ENCODE measurements at regions of chr19 and their contacts with region 1.

Region 1: GRCh38 chr19:11293433-11294389 is 2.2 kb upstream of the TSPAN16 start:
- DNase-seq: peak; percentile 77 to 81
- ATAC-seq: peak; percentile 94 to 100 (median 99)
- H3K4me3 ChIP-seq: no peak overlapping the region
- H3K4me3 Mint-ChIP-seq: no peak overlapping the region
- H3K27ac ChIP-seq: no peak overlapping the region
- H3K27ac Mint-ChIP-seq: no peak overlapping the region
- H3K4me1 ChIP-seq: peaks cover 10% of the 10 kb centered on the region
- H3K4me1 Mint-ChIP-seq: peaks cover 0 to 10% of the 10 kb centered on the region in 2 donors
- H3K27me3 ChIP-seq: no peaks in the 10 kb centered on the region
- H3K27me3 Mint-ChIP-seq: peaks cover 8 to 11% of the 10 kb centered on the region in 2 donors
- CTCF ChIP-seq: peak; percentile 90

Region 2: GRCh38 chr19:11446652-11447301 is 153.1 kb after region 1 on chr19:
- intact Hi-C with region 1: loop called (anchors 5 kb)
- DNase-seq: peak; percentile 42 to 64
- ATAC-seq: peak; percentile 65 to 81 (median 78)
- H3K4me3 ChIP-seq: no peak overlapping the region
- H3K4me3 Mint-ChIP-seq: no peak overlapping the region
- H3K27ac ChIP-seq: no peak overlapping the region
- H3K27ac Mint-ChIP-seq: peak overlapping the region in 1 of 2 donors; percentile 60
- H3K4me1 ChIP-seq: no peaks in the 10 kb centered on the region
- H3K4me1 Mint-ChIP-seq: peaks cover 0 to 11% of the 10 kb centered on the region in 2 donors
- H3K27me3 ChIP-seq: no peaks in the 10 kb centered on the region
- H3K27me3 Mint-ChIP-seq: no peaks in the 10 kb centered on the region
- CTCF ChIP-seq: peak; percentile 57

Region 3: GRCh38 chr19:11482384-11483050 is 188.8 kb after region 1 on chr19:
- intact Hi-C with region 1: loop called (anchors 1 kb)
- DNase-seq: peak; percentile 91 to 95
- ATAC-seq: peak; percentile 87 to 95 (median 91)
- H3K4me3 ChIP-seq: peak overlapping the region; percentile 5
- H3K4me3 Mint-ChIP-seq: peak overlapping the region; percentile 77
- H3K27ac ChIP-seq: no peak overlapping the region
- H3K27ac Mint-ChIP-seq: peak overlapping the region; percentile 31 to 89
- H3K4me1 ChIP-seq: peaks cover 33% of the 10 kb centered on the region
- H3K4me1 Mint-ChIP-seq: peaks cover 15 to 30% of the 10 kb centered on the region in 2 donors
- H3K27me3 ChIP-seq: peaks cover 24% of the 10 kb centered on the region
- H3K27me3 Mint-ChIP-seq: peaks cover 24 to 27% of the 10 kb centered on the region in 2 donors
- CTCF ChIP-seq: peak; percentile 90

Measured in natural killer cell (primary cell).